Endothelial cell of umbilical vein (primary cell): ENCODE measurements at regions of chr7 and their contacts with region 1.

Region 1: DNA sequence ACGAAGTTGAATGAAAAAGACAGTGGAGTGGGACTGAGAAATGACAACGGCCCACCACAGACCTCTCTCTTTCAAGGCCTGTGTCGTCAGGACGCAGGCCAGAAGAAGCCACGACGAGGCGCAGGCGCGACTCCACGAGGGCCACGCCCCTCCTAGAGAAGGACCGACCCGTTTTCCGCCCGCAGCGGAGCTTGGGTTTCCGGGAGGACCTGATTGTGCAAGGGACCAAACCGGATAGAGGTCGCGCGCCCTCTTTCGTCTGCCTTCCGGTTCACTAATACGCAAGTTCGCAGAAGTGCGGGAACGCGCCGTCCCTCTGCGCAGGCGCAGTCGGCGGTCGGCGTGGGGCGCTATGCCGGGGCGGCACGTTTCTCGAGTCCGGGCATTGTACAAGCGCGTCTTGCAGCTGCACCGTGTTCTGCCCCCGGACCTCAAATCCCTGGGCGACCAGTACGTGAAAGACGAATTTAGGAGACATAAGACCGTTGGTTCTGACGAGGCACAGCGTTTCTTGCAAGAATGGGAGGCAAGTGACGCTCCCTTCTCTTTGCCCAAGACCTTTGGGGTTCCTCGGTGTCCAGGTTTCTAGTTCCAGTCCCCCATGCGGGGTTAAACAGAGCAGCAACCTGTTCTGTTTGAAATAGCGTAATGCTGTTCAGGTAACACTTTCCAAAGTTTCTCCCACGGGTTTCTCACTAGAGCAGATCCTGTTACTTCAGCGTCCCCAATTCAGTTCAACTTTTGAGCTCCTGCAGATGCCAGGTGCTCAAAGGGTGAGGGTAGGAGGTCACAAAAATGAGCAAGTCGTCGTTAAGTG is at the start of gene SDHAF3:
- DNase-seq: peak; percentile 93
- H3K4me3 ChIP-seq: peak within 1 kb of the TSS; percentile 71 to 93 (median 90)
- H3K27ac ChIP-seq: peak within 1 kb of the TSS; percentile 15
- H3K4me1 ChIP-seq: peaks cover 10% of the 10 kb centered on the region
- H3K27me3 ChIP-seq: no peaks in the 10 kb centered on the region
- CTCF ChIP-seq: no peak
- POLR2A ChIP-seq: peak; percentile 88
- total RNA-seq, gene SDHAF3: 5.2 and 7.1 TPM in 2 replicates

Region 2: DNA sequence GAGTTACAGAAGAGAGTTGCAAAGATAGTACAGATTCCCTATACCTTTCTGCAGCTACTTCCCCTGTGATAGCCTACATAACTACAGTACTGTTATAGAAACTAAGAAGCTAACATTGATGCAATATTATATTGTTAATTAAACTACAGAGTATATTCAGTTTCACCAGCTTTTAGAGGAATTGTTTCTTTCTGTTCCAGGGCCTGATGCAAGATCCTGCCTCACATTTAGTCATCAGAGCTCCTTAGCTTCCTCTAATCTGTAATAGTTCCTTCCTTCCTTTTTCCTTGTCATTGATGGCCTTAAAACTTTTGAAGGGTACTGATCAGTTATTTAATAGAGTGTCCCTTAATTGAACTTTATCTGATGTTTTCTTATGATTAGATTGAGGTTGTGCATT is 56.7 kb after region 1 on chr7:
- CTCF ChIA-PET with region 1: interaction called, 12 read pairs
- POLR2A ChIA-PET with region 1: no interaction called
- dilution Hi-C with region 1: no loop called
- intact Hi-C with region 1: loop called (anchors 2 kb)
- DNase-seq: peak; percentile 11
- H3K4me3 ChIP-seq: no peak overlapping the region
- H3K27ac ChIP-seq: no peak overlapping the region
- H3K4me1 ChIP-seq: peaks cover 7% of the 10 kb centered on the region
- H3K27me3 ChIP-seq: no peaks in the 10 kb centered on the region
- CTCF ChIP-seq: no peak
- POLR2A ChIP-seq: no peak

Region 3: GRCh38 chr7:97179454-97180104 is 62.0 kb after region 1 on chr7:
- CTCF ChIA-PET with region 1: interaction called, 12 read pairs
- POLR2A ChIA-PET with region 1: no interaction called
- dilution Hi-C with region 1: no loop called
- intact Hi-C with region 1: loop called (anchors 2 kb)
- DNase-seq: peak; percentile 56
- H3K4me3 ChIP-seq: no peak overlapping the region
- H3K27ac ChIP-seq: no peak overlapping the region
- H3K4me1 ChIP-seq: peaks cover 2% of the 10 kb centered on the region
- H3K27me3 ChIP-seq: no peaks in the 10 kb centered on the region
- CTCF ChIP-seq: peak; percentile 57 to 82
- POLR2A ChIP-seq: no peak

Region 4: GRCh38 chr7:97667359-97667758 is 549.8 kb after region 1 on chr7:
- CTCF ChIA-PET with region 1: no interaction called
- POLR2A ChIA-PET with region 1: no interaction called
- dilution Hi-C with region 1: no loop called
- intact Hi-C with region 1: no loop called
- DNase-seq: no peak
- H3K4me3 ChIP-seq: no peak overlapping the region
- H3K27ac ChIP-seq: no peak overlapping the region
- H3K4me1 ChIP-seq: no peaks in the 10 kb centered on the region
- H3K27me3 ChIP-seq: no peaks in the 10 kb centered on the region
- CTCF ChIP-seq: no peak
- POLR2A ChIP-seq: no peak